OCI-LY7 (cell line): ENCODE measurements at regions of chr17 and their contacts with region 1.

Region 1: GRCh38 chr17:82551779-82552457 is 32.4 kb downstream of the FOXK2 start:
- DNase-seq: peak; percentile 91
- H3K4me3 ChIP-seq: peak overlapping the region; percentile 1
- H3K27ac ChIP-seq: peak overlapping the region; percentile 17
- H3K4me1 ChIP-seq: peaks cover 37% of the 10 kb centered on the region
- CTCF ChIP-seq: peak; percentile 99

Region 2: DNA sequence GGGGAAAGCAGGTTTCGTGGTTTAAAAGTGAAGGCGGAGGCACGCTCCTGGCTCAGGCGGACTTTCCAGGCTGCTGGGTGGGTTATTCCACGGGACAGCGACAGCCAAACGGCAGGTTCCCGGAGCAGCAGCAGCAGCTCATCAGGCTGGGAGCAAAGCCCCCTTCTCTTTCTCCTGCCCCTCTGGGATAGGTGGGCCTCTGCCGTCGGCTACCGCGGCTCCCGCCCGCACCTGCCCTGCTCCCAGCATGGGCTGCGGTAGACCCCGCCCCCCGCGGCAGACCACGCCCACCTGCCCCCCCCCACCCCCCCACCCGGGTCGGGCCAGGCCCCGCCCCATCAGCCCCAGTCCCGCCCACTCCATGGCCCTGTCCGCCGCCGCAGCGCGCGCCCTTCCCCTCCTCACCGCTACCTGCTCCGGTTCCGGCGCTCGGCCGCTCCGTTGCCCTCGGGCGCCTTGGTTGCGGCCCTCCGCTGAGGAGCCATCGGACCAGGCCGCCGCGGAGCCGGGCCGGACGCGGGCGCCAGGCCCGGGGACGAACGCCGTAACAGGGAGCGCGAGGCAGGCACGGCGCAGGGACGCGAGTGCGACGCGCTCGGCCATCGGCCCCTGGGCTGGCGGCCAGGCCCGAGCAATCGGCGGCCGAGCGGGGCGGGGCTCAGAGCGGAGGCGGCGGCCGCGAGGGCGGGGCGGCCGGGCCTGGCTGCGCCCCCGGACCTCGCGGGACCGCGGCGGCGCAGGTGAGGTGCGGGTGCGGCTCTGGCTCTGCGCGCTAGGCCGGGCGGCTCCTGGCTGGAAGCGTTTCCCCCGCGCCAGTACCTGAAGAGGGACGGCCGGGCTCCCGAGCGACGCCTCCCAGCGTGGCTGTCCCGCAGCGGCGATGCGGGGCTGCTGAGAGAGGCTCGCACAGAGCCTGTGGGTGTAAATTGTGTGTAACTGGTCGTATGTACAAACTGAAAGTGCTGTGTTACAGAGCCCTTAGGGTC is 133.6 kb before region 1 on chr17 and contains the starts of genes HEXD and OGFOD3:
- CTCF ChIA-PET with region 1: no interaction called
- POLR2A ChIA-PET with region 1: no interaction called
- intact Hi-C with region 1: loop called (anchors 5 kb)
- DNase-seq: peak; percentile 96
- H3K4me3 ChIP-seq: peak within 1 kb of the TSS; percentile 84
- H3K27ac ChIP-seq: peak within 1 kb of the TSS; percentile 66
- H3K4me1 ChIP-seq: peaks cover 20% of the 10 kb centered on the region
- CTCF ChIP-seq: no peak
- total RNA-seq, gene HEXD: 88.8 and 93.2 TPM in 2 replicates
- total RNA-seq, gene OGFOD3: 46.9 and 55.6 TPM in 2 replicates

Region 3: DNA sequence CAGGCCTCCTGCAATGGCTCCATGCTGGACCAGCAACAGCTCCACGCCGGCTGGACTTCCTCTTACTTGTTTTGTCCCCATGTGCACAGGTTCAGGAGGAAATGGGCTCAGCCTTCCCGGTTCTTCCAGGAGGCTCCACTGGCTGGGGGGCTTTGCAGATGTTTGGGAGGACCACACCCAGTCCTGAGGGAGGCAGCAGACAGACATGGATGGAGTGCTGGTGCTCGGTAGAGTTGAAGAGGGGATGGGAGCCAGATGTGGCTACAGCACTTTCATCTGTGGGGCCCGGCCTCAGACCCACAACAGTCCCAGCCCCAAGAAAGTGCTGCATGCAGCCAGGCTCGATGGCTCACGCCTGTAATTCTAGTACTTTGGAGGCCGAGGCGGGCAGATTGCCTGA is 71.6 kb before region 1 on chr17:
- CTCF ChIA-PET with region 1: interaction called, 3 read pairs
- POLR2A ChIA-PET with region 1: no interaction called
- intact Hi-C with region 1: loop called (anchors 2 kb)
- DNase-seq: no peak
- H3K4me3 ChIP-seq: no peak overlapping the region
- H3K27ac ChIP-seq: no peak overlapping the region
- H3K4me1 ChIP-seq: no peaks in the 10 kb centered on the region
- CTCF ChIP-seq: no peak

Region 4: GRCh38 chr17:82518826-82519810 is 32.8 kb before region 1 on chr17 and contains the start of gene FOXK2:
- CTCF ChIA-PET with region 1: no interaction called
- POLR2A ChIA-PET with region 1: interaction called, 6 read pairs
- intact Hi-C with region 1: loop called (anchors 2 kb)
- DNase-seq: peak; percentile 99
- H3K4me3 ChIP-seq: peak within 1 kb of the TSS; percentile 84
- H3K27ac ChIP-seq: peak within 1 kb of the TSS; percentile 67
- H3K4me1 ChIP-seq: peaks cover 39% of the 10 kb centered on the region
- CTCF ChIP-seq: no peak
- total RNA-seq, gene FOXK2: 62.4 and 76.2 TPM in 2 replicates